H1 (cell line): ENCODE measurements at regions of chr16 and their contacts with region 1.

Region 1: GRCh38 chr16:87602001-87602790 is at the start of gene JPH3:
- DNase-seq: peak; percentile 70 to 87
- H3K4me3 ChIP-seq: peak within 1 kb of the TSS; percentile 56 to 98 (median 96)
- H3K27ac ChIP-seq: no peak within 1 kb of the TSS
- H3K4me1 ChIP-seq: peaks cover 0 to 9% (median 6%) of the 10 kb centered on the region in 4 experiments; a peak in 5 of 7 replicates
- H3K27me3 ChIP-seq: peaks cover 0 to 9% (median 3%) of the 10 kb centered on the region in 4 experiments; a peak in 5 of 7 replicates
- CTCF ChIP-seq: no peak
- EP300 ChIP-seq: no peak
- POLR2A ChIP-seq: no peak
- RAD21 ChIP-seq: no peak
- total RNA-seq, gene JPH3: 28.3 and 28.4 TPM in 2 replicates

Region 2: GRCh38 chr16:87587636-87588035 is 14.6 kb before region 1 on chr16:
- CTCF ChIA-PET with region 1: interaction called, 20 read pairs
- POLR2A ChIA-PET with region 1: interaction called, 5 read pairs
- DNase-seq: no peak
- H3K4me3 ChIP-seq: no peak overlapping the region
- H3K27ac ChIP-seq: no peak overlapping the region
- H3K4me1 ChIP-seq: peaks cover 3 to 12% (median 8%) of the 10 kb centered on the region in 4 experiments
- H3K27me3 ChIP-seq: no peaks in the 10 kb centered on the region
- CTCF ChIP-seq: no peak
- EP300 ChIP-seq: no peak
- POLR2A ChIP-seq: no peak
- RAD21 ChIP-seq: no peak

Region 3: GRCh38 chr16:87620201-87620495 is 18.0 kb after region 1 on chr16:
- CTCF ChIA-PET with region 1: interaction called, 10 read pairs
- POLR2A ChIA-PET with region 1: interaction called, 10 read pairs
- DNase-seq: no peak
- H3K4me3 ChIP-seq: no peak overlapping the region
- H3K27ac ChIP-seq: no peak overlapping the region
- H3K4me1 ChIP-seq: peaks cover 0 to 20% (median 3%) of the 10 kb centered on the region in 4 experiments; a peak in 6 of 7 replicates
- H3K27me3 ChIP-seq: no peaks in the 10 kb centered on the region
- CTCF ChIP-seq: peak; percentile 3 to 37 (median 33); a peak in 2 of 4 replicates
- EP300 ChIP-seq: no peak
- POLR2A ChIP-seq: no peak
- RAD21 ChIP-seq: no peak

Region 4: DNA sequence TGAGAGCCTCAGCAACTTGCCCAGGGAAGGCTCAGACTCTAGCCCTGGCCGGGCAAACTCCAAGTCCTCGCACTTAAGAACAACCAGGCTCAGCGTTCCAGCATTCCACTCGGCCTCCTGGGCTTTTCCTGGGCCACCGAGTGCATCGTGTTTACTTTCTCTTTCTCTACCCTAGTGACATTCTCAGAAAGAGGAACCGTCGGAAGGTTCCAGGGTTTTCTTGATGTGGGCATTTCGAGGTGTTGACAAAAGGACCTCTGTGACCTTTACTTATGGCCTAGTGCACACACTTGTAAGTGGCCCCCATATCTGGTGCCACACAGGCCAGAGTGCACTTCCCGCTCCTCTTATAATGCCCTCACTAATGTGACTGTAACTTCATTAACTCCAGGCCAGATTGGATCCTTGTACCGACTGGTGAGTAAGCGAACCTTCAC is 345.9 kb after region 1 on chr16:
- CTCF ChIA-PET with region 1: no interaction called
- POLR2A ChIA-PET with region 1: no interaction called
- DNase-seq: no peak
- H3K4me3 ChIP-seq: no peak overlapping the region
- H3K27ac ChIP-seq: no peak overlapping the region
- H3K4me1 ChIP-seq: peaks cover 6 to 20% (median 11%) of the 10 kb centered on the region in 4 experiments
- H3K27me3 ChIP-seq: no peaks in the 10 kb centered on the region
- CTCF ChIP-seq: no peak
- EP300 ChIP-seq: no peak
- POLR2A ChIP-seq: no peak
- RAD21 ChIP-seq: no peak